MCF 10A (cell line): ENCODE measurements at regions of chrX and their contacts with region 1.

Region 1: DNA sequence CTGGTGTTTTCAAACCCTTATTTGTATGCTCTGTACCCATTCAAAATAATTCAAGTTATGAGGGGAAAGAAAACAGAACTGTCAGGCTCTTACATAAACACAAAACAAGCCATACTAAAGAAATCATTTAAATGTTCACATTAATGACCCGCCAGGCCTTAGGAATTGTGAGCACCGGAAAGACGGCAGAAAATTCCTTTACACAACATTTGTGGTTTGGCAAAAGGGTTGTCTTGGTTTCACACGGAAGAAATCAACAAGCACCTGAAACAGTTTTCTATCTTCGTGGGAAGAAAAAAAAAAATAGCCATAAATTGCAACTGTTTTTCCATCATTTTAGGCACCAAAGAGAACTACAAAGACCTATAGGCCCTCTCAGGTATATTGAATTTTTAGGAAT is 188.5 kb upstream of the FTHL17 start:
- DNase-seq: peak; percentile 68
- H3K4me3 Mint-ChIP-seq: no peak overlapping the region
- H3K27ac Mint-ChIP-seq: peak overlapping the region; percentile 79
- H3K4me1 Mint-ChIP-seq: peaks cover 13% of the 10 kb centered on the region
- H3K27me3 Mint-ChIP-seq: peaks cover 29% of the 10 kb centered on the region
- CTCF ChIP-seq: no peak

Region 2: DNA sequence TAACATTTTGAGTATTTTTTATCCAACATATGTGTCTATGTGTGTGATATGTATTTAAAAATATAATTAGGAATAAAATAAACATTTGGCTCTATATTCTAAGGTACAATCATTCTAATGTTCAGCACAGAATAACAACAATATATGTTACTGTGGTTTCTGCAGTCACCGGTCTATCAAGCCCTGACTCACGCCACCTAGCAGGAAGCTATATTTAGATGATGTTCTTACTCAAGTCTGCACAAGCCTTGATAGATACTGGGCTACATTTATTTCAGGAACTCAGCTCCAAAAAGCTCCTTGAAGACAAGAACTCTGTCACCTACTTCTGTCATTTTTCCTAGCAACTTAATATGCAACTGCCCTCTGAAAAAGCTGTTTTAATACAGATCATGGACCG is 36.5 kb before region 1 on chrX:
- CTCF ChIA-PET with region 1: interaction called, 4 read pairs
- POLR2A ChIA-PET with region 1: interaction called, 38 read pairs
- intact Hi-C with region 1: loop called (anchors 1 kb)
- DNase-seq: peak; percentile 75
- H3K4me3 Mint-ChIP-seq: peak overlapping the region; percentile 32
- H3K27ac Mint-ChIP-seq: peak overlapping the region; percentile 74
- H3K4me1 Mint-ChIP-seq: peaks cover 5% of the 10 kb centered on the region
- H3K27me3 Mint-ChIP-seq: peaks cover 11% of the 10 kb centered on the region
- CTCF ChIP-seq: no peak